ENCODE measurements at regions of chr2 and their contacts with region 1.

Region 1: DNA sequence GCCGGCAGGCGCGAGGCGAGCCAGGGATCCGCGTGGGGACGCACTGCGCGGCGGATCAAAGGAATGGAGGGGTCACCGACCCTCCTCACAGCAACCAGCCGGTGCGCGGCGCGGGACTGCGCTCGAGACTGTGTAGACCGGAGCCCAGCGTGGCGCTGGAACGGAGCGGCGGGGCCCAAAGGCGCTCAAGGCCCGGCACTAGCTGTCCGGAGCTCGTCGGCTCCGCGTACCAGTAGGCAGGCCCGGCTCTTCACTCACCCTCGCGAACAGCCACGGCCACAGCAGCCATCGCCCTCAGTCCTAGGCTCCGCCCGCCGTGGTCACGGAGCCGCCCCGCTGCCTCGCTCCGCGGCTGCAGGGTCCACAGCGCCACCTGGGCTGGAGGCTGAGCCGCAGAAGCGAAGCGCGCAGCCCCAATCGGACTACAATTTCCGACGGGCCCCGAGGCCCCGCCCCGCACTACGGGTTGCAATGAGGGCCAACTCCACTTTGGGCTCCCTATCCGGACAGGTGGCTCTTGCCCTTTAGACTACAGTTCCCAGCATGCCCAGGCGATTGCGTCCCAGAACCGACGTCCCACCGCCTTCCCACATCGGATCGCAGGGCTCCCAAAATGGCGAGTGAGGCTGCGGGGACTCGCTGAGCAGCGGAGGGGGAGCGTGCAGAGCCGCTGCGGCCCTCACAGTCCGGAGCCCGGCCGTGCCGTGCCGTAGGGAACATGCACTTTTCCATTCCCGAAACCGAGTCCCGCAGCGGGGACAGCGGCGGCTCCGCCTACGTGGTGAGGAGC is at the starts of genes EIF2B4 and SNX17:
- DNase-seq: peak; percentile 96 to 100 (median 99)
- ATAC-seq: peak; percentile 96
- H3K4me3 ChIP-seq: peak within 1 kb of the TSS; percentile 94
- H3K4me3 Mint-ChIP-seq: peak within 1 kb of the TSS; percentile 85 to 100 (median 96)
- H3K27ac ChIP-seq: peak within 1 kb of the TSS; percentile 93
- H3K27ac Mint-ChIP-seq: peak within 1 kb of the TSS; percentile 81 to 99 (median 95)
- H3K4me1 ChIP-seq: peaks cover 29 to 30% of the 10 kb centered on the region in 2 donors
- H3K4me1 Mint-ChIP-seq: peaks cover 29 to 53% (median 46%) of the 10 kb centered on the region in 7 donors
- H3K27me3 ChIP-seq: no peaks in the 10 kb centered on the region
- H3K27me3 Mint-ChIP-seq: no peaks in the 10 kb centered on the region
- total RNA-seq, gene EIF2B4: 36.5 to 56.1 (median 44.1) TPM
- total RNA-seq, gene SNX17: 71.0 to 128 (median 111) TPM

Region 2: GRCh38 chr2:27079233-27080139 is 290.7 kb before region 1 on chr2:
- CTCF ChIA-PET with region 1: no interaction called
- POLR2A ChIA-PET with region 1: no interaction called
- intact Hi-C with region 1: loop called (anchors 1 to 2 kb)
- DNase-seq: no peak
- ATAC-seq: no peak
- H3K4me3 ChIP-seq: no peak overlapping the region
- H3K4me3 Mint-ChIP-seq: no peak overlapping the region
- H3K27ac ChIP-seq: no peak overlapping the region
- H3K27ac Mint-ChIP-seq: peak overlapping the region in 4 of 9 donors; percentile 79 to 97 (median 96)
- H3K4me1 ChIP-seq: peaks cover 18 to 32% of the 10 kb centered on the region in 2 donors
- H3K4me1 Mint-ChIP-seq: peaks cover 27 to 53% (median 45%) of the 10 kb centered on the region in 7 donors
- H3K27me3 ChIP-seq: no peaks in the 10 kb centered on the region
- H3K27me3 Mint-ChIP-seq: no peaks in the 10 kb centered on the region

Region 3: GRCh38 chr2:27217217-27218121 is 152.8 kb before region 1 on chr2 and contains the start of gene CAD:
- CTCF ChIA-PET with region 1: no interaction called
- POLR2A ChIA-PET with region 1: interaction called, 6 read pairs
- intact Hi-C with region 1: loop called (anchors 1 to 5 kb)
- DNase-seq: peak; percentile 71 to 90 (median 80)
- ATAC-seq: peak; percentile 87
- H3K4me3 ChIP-seq: peak within 1 kb of the TSS; percentile 68
- H3K4me3 Mint-ChIP-seq: peak within 1 kb of the TSS; percentile 90 to 98 (median 96)
- H3K27ac ChIP-seq: peak within 1 kb of the TSS; percentile 85
- H3K27ac Mint-ChIP-seq: peak within 1 kb of the TSS; percentile 86 to 96 (median 94)
- H3K4me1 ChIP-seq: peaks cover 19 to 24% of the 10 kb centered on the region in 2 donors
- H3K4me1 Mint-ChIP-seq: peaks cover 26 to 52% (median 45%) of the 10 kb centered on the region in 7 donors
- H3K27me3 ChIP-seq: no peaks in the 10 kb centered on the region
- H3K27me3 Mint-ChIP-seq: no peaks in the 10 kb centered on the region
- total RNA-seq, gene CAD: 34.4 to 65.7 (median 45.4) TPM

Region 4: DNA sequence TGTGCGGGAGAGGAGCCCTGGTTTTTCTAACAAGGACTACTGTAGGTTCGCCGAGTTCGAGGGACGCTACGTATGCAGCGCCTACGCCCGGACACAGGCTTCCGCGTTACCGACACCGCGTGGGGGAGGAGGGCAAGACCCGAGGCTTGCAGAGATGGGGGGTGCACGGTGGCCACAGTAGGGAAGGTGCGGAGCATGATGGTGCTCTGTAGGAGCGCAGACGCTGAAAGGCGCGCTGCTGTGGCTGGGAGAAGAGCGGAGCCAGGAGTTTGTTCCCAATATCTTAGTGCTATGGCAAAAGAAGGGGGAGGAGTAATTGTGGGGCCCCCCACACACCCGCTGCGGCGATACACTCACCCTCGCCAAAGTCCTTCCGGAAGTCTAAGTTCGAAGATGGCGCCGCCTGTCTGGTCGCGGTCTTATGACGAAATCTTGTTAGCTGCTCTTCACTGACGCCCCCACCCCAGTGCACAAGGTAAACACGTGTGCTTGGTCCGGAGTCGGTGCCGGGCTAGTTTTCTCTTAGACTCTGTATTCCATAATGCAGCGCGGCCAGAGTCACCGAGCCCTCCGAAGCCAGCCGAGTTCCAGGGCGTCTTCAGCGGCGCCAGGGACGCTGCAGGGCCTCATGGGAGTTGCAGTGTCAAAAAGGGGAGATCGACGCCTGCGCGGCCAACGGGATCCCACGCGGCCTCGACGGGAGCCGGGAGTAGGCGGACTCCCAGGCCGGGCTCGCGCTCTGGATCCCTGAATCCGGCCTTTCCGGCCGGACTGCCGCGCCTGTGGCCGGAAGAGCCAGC is 13.6 kb before region 1 on chr2 and contains the start of gene GTF3C2:
- CTCF ChIA-PET with region 1: interaction called, 5 read pairs
- POLR2A ChIA-PET with region 1: interaction called, 65 read pairs
- intact Hi-C with region 1: loop called (anchors 1 kb)
- DNase-seq: peak; percentile 76 to 94 (median 92)
- ATAC-seq: peak; percentile 85
- H3K4me3 ChIP-seq: peak within 1 kb of the TSS; percentile 96
- H3K4me3 Mint-ChIP-seq: peak within 1 kb of the TSS; percentile 95 to 100 (median 98)
- H3K27ac ChIP-seq: peak within 1 kb of the TSS; percentile 91
- H3K27ac Mint-ChIP-seq: peak within 1 kb of the TSS; percentile 96 to 100 (median 99)
- H3K4me1 ChIP-seq: peaks cover 24 to 34% of the 10 kb centered on the region in 2 donors
- H3K4me1 Mint-ChIP-seq: peaks cover 38 to 63% (median 56%) of the 10 kb centered on the region in 7 donors
- H3K27me3 ChIP-seq: no peaks in the 10 kb centered on the region
- H3K27me3 Mint-ChIP-seq: no peaks in the 10 kb centered on the region
- total RNA-seq, gene GTF3C2: 68.0 to 106 (median 78.3) TPM

Region 5: DNA sequence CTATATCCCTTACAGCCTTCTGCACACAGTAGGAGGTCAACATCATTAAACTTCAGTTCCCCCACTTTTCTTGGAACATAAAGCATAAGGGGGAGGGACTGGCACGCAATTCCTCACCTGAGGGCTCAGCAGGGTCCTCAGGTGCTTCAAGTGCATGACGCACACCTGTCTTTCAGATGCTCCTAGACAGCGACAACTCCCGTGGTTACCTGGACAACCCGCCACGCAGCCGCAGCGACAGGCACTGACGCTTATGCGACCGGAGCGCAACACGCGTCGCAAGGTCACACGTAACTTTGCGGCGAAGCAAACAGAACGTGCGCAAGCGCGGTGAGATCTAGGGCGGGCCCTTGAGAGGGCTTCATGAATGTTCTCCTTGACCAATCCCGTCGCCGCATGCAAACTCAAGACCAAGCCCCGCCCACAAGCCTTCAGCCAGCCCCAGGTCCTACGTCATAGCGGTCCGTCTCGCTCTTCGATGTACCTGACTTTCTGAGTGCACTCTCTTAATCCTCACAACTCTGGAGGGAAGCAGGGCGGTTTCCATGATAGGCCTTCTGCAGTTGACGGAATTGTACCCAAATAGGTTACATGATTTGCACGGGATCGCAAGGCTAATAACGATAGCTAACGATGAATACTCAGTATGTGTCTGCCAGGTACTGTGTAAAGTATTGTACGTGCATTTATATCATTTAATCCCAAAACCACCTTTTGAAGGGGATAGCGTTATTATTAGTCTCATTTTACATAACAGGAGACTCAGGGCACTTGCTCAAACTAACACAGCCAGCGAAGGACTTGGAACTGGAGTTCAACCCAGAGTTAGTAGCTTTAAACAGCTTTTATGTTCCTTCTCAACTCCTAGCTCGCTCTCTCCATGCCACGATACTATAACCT is 119.5 kb after region 1 on chr2 and contains the start of gene IFT172:
- CTCF ChIA-PET with region 1: no interaction called
- POLR2A ChIA-PET with region 1: no interaction called
- intact Hi-C with region 1: loop called (anchors 1 kb)
- DNase-seq: peak; percentile 90 to 100 (median 99)
- ATAC-seq: peak; percentile 96
- H3K4me3 ChIP-seq: peak within 1 kb of the TSS; percentile 63
- H3K4me3 Mint-ChIP-seq: peak within 1 kb of the TSS; percentile 78 to 92 (median 84)
- H3K27ac ChIP-seq: peak within 1 kb of the TSS; percentile 80
- H3K27ac Mint-ChIP-seq: peak within 1 kb of the TSS; percentile 82 to 99 (median 98)
- H3K4me1 ChIP-seq: peaks cover 11 to 16% of the 10 kb centered on the region in 2 donors
- H3K4me1 Mint-ChIP-seq: peaks cover 8 to 29% (median 19%) of the 10 kb centered on the region in 7 donors
- H3K27me3 ChIP-seq: peaks cover 0 to 7% of the 10 kb centered on the region in 2 donors
- H3K27me3 Mint-ChIP-seq: peaks cover 13 to 20% (median 17%) of the 10 kb centered on the region in 5 donors
- total RNA-seq, gene IFT172: 12.3 to 35.8 (median 22.2) TPM